A549 (cell line): ENCODE measurements at regions of chr1 and their contacts with region 1.

Region 1: GRCh38 chr1:205528887-205529825 is 24.7 kb downstream of the CDK18 start:
- DNase-seq: peak; percentile 66 to 88
- ATAC-seq: peak; percentile 78 to 93
- H3K4me3 ChIP-seq: peak overlapping the region; percentile 42
- H3K27ac ChIP-seq: peak overlapping the region; percentile 42 to 77; a peak in 4 of 6 replicates
- H3K4me1 ChIP-seq: 0 out of 3 replicates have a peak, but pooled peaks cover 3% of the 10 kb centered on the region
- CTCF ChIP-seq: peak; percentile 90
- EP300 ChIP-seq: no peak
- POLR2A ChIP-seq: no peak
- RAD21 ChIP-seq: peak; percentile 82 to 85

Region 2: DNA sequence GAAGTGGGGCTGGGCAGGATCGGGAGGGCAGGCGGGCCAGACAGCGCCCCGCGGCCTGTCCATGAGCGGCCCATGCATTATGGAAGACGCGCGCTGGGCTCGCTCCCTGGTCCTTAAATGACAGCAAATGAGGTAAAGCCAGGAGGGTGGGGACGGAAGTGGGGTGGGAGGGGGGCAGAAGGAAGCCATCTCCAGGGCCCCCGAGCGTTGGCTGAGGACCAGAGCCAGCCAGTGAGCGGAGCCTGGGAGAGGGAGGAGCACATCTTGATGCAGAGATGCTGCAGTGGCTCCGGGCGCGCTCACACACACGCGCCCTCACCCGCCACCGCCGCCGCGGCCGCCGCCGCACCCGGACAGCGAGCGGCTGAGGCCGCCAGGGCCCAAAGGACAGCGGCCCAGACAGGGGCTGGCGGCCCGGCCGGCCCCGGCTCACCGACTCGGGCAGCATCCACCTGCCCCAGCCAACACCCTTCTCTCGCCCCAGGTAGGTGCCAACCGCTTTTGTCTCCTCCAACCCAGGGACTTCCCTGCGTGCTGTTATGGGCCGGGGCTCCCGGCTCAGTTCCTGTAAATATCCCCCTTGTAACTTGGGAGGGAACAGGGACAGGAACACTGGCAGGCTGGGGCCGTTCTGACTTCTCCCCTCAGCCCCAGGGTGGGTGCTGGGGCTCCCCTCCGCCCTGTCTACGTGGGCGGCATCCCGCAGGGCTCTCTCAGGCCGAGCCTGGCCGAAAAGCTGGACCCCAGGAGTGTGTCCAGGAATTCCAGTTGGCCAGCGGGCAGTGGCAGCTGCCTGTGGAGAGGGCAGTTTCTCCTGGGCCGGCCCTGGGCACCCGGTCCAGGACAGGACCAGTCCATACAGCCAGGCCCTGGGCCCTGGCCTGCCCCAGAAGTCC is 486.0 kb before region 1 on chr1 and contains the start of gene CNTN2:
- CTCF ChIA-PET with region 1: no interaction called
- POLR2A ChIA-PET with region 1: no interaction called
- DNase-seq: no peak
- ATAC-seq: peak; percentile 27 to 70; a peak in 4 of 6 replicates
- H3K4me3 ChIP-seq: peak within 1 kb of the TSS; percentile 10; the same call in 1 of the 3 replicates
- H3K27ac ChIP-seq: no peak within 1 kb of the TSS
- H3K4me1 ChIP-seq: peaks cover 5% of the 10 kb centered on the region; the same call in 1 of the 3 replicates
- CTCF ChIP-seq: no peak
- EP300 ChIP-seq: no peak
- POLR2A ChIP-seq: no peak
- RAD21 ChIP-seq: no peak
- polyA plus RNA-seq, gene CNTN2: not detected in 2 replicates

Region 3: GRCh38 chr1:205335643-205336091 is 193.5 kb before region 1 on chr1:
- CTCF ChIA-PET with region 1: interaction called, 315 read pairs
- POLR2A ChIA-PET with region 1: no interaction called
- DNase-seq: peak; percentile 89 to 90
- ATAC-seq: peak; percentile 91 to 97
- H3K4me3 ChIP-seq: no peak overlapping the region
- H3K27ac ChIP-seq: no peak overlapping the region
- H3K4me1 ChIP-seq: peaks cover under 1% of the 10 kb centered on the region; the same call in 1 of the 3 replicates
- CTCF ChIP-seq: peak; percentile 99
- EP300 ChIP-seq: no peak
- POLR2A ChIP-seq: no peak
- RAD21 ChIP-seq: peak; percentile 88 to 92

Region 4: GRCh38 chr1:205568469-205569361 is 39.6 kb after region 1 on chr1:
- CTCF ChIA-PET with region 1: interaction called, 17 read pairs
- POLR2A ChIA-PET with region 1: no interaction called
- DNase-seq: no peak
- ATAC-seq: peak; percentile 25 to 50; a peak in 3 of 6 replicates
- H3K4me3 ChIP-seq: peak overlapping the region; percentile 46
- H3K27ac ChIP-seq: peak overlapping the region in 1 of 2 experiments; percentile 56; a peak in 3 of 6 replicates
- H3K4me1 ChIP-seq: peaks cover 5% of the 10 kb centered on the region; the same call in 1 of the 3 replicates
- CTCF ChIP-seq: no peak
- EP300 ChIP-seq: no peak
- POLR2A ChIP-seq: no peak
- RAD21 ChIP-seq: no peak

Region 5: GRCh38 chr1:205582471-205583291 is 53.5 kb after region 1 on chr1:
- CTCF ChIA-PET with region 1: interaction called, 11 read pairs
- POLR2A ChIA-PET with region 1: no interaction called
- DNase-seq: no peak
- ATAC-seq: peak in 1 of 2 experiments; percentile 12; a peak in 1 of 6 replicates
- H3K4me3 ChIP-seq: no peak overlapping the region
- H3K27ac ChIP-seq: no peak overlapping the region
- H3K4me1 ChIP-seq: no peaks in the 10 kb centered on the region; the same call in 2 of the 3 replicates
- CTCF ChIP-seq: no peak
- EP300 ChIP-seq: no peak
- POLR2A ChIP-seq: no peak
- RAD21 ChIP-seq: no peak

Region 6: GRCh38 chr1:205668951-205669340 is 139.8 kb after region 1 on chr1:
- CTCF ChIA-PET with region 1: interaction called, 10 read pairs
- POLR2A ChIA-PET with region 1: no interaction called
- DNase-seq: no peak
- ATAC-seq: 0 out of 6 replicates have a peak, but pooled peaks of 1 of the 2 experiments have one; percentile 29
- H3K4me3 ChIP-seq: no peak overlapping the region
- H3K27ac ChIP-seq: peak overlapping the region in 1 of 2 experiments; percentile 56; a peak in 3 of 6 replicates
- H3K4me1 ChIP-seq: peaks cover 20% of the 10 kb centered on the region; the same call in 2 of the 3 replicates
- CTCF ChIP-seq: no peak
- EP300 ChIP-seq: no peak
- POLR2A ChIP-seq: no peak
- RAD21 ChIP-seq: no peak